ENCODE measurements at regions of chr9 and their contacts with region 1.

Region 1: DNA sequence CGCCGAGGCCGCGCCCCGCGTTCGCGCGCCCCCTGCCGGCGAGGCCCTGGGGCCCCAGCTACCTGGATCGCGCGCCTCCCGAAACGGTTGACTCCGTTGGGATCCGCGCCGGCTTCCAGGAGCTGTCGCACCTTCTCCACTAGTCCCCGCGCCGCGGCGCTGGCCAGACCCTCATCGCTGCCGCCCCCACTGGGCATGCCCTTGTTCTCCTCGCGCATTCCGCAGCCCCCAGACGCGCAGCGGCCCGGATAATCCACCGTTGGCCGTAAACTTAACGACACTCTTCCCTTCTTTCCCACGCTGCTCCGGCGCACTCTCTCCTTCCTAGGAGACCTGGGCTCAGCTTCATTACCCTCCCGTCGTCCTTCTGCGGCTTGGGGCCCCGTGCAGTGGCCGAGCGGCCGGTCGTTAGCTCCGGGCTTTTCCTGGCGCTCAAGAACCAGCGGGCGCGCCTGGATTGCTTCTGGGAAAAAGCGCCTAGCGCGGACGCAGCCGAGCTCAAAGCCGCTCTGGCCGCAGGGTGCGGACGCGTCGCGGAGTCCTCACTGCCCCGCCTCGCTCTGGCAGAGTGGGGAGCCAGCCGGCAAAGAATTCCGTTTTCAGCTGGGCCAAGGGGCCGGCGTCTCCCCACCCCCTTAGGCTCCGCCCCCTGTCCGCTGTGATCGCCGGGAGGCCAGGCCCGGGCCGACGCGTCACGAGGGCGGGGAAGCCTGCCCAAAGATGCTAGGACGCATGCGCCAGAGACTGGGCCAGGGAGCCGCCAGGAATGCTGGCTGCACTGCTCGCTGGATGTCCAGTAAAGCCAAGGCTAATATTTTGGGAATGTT is at the start of gene CDKN2B:
- DNase-seq: peak; percentile 95
- H3K4me3 ChIP-seq: peak within 1 kb of the TSS; percentile 60 to 95 (median 90)
- H3K27ac ChIP-seq: peak within 1 kb of the TSS; percentile 70
- H3K4me1 ChIP-seq: peaks cover 16% of the 10 kb centered on the region
- H3K27me3 ChIP-seq: peaks cover 20 to 36% of the 10 kb centered on the region in 2 experiments
- CTCF ChIP-seq: peak; percentile 89 to 95
- POLR2A ChIP-seq: peak; percentile 95
- total RNA-seq, gene CDKN2B: 2.1 and 2.3 TPM in 2 replicates

Region 2: DNA sequence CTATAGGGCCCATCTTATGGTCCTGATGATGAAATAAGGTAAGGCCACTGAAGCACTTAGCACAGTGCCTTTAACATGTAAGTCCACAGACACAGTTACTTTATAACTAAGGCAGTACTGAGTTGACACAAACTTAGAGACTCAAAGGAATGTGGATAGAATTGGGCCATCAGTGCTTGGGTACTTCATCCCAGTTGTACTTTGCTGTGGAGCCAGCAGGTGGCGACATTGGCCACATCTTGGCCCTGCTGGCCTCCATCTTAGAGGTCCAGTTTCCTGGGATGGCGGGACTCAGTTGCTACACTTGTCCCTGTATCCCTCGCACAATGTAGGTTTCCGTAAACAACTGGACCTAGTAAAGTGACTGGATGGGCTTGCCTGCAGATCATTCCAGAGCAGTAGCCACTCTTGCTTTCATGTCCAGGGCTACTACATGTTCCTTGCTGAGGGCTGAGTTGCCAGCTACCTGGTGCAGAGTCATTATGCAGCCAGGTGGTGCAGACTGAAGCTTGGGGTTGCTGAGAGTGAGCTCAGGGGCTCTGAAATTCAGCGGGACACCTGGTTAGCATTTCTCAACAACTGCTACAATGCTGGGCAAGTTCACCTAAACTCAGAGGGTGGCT is 195.9 kb before region 1 on chr9:
- CTCF ChIA-PET with region 1: interaction called, 139 read pairs
- POLR2A ChIA-PET with region 1: interaction called, 4 read pairs
- dilution Hi-C with region 1: no loop called
- intact Hi-C with region 1: loop called (anchors 1 kb)
- DNase-seq: peak; percentile 81
- H3K4me3 ChIP-seq: no peak overlapping the region
- H3K27ac ChIP-seq: peak overlapping the region; percentile 85
- H3K4me1 ChIP-seq: peaks cover 20% of the 10 kb centered on the region
- H3K27me3 ChIP-seq: no peaks in the 10 kb centered on the region
- CTCF ChIP-seq: peak; percentile 86 to 89
- POLR2A ChIP-seq: no peak

Region 3: GRCh38 chr9:21883642-21884041 is 125.3 kb before region 1 on chr9:
- CTCF ChIA-PET with region 1: no interaction called
- POLR2A ChIA-PET with region 1: no interaction called
- dilution Hi-C with region 1: no loop called
- intact Hi-C with region 1: no loop called
- DNase-seq: no peak
- H3K4me3 ChIP-seq: no peak overlapping the region
- H3K27ac ChIP-seq: no peak overlapping the region
- H3K4me1 ChIP-seq: no peaks in the 10 kb centered on the region
- H3K27me3 ChIP-seq: no peaks in the 10 kb centered on the region
- CTCF ChIP-seq: no peak
- POLR2A ChIP-seq: no peak

Region 4: GRCh38 chr9:21974548-21975409 is 34.2 kb before region 1 on chr9:
- CTCF ChIA-PET with region 1: interaction called, 47 read pairs
- POLR2A ChIA-PET with region 1: interaction called, 4 read pairs
- dilution Hi-C with region 1: no loop called
- intact Hi-C with region 1: loop called (anchors 2 kb)
- DNase-seq: peak; percentile 51
- H3K4me3 ChIP-seq: peak overlapping the region; percentile 31 to 51 (median 35)
- H3K27ac ChIP-seq: no peak overlapping the region
- H3K4me1 ChIP-seq: peaks cover 19% of the 10 kb centered on the region
- H3K27me3 ChIP-seq: peaks cover 77 to 99% of the 10 kb centered on the region in 2 experiments
- CTCF ChIP-seq: no peak
- POLR2A ChIP-seq: no peak

Region 5: GRCh38 chr9:22030101-22030598 is 21.2 kb after region 1 on chr9:
- CTCF ChIA-PET with region 1: interaction called, 17 read pairs
- POLR2A ChIA-PET with region 1: interaction called, 3 read pairs
- dilution Hi-C with region 1: no loop called
- intact Hi-C with region 1: no loop called
- DNase-seq: peak; percentile 83
- H3K4me3 ChIP-seq: no peak overlapping the region
- H3K27ac ChIP-seq: peak overlapping the region; percentile 44
- H3K4me1 ChIP-seq: peaks cover 12% of the 10 kb centered on the region
- H3K27me3 ChIP-seq: no peaks in the 10 kb centered on the region
- CTCF ChIP-seq: no peak
- POLR2A ChIP-seq: no peak

Region 6: GRCh38 chr9:22119537-22120158 is 110.7 kb after region 1 on chr9:
- CTCF ChIA-PET with region 1: interaction called, 138 read pairs
- POLR2A ChIA-PET with region 1: interaction called, 7 read pairs
- dilution Hi-C with region 1: no loop called
- intact Hi-C with region 1: loop called (anchors 1 kb)
- DNase-seq: peak; percentile 53
- H3K4me3 ChIP-seq: no peak overlapping the region
- H3K27ac ChIP-seq: no peak overlapping the region
- H3K4me1 ChIP-seq: peaks cover 26% of the 10 kb centered on the region
- H3K27me3 ChIP-seq: no peaks in the 10 kb centered on the region
- CTCF ChIP-seq: peak; percentile 35 to 53
- POLR2A ChIP-seq: no peak

Region 7: GRCh38 chr9:22244141-22245011 is 235.4 kb after region 1 on chr9:
- CTCF ChIA-PET with region 1: interaction called, 61 read pairs
- POLR2A ChIA-PET with region 1: interaction called, 3 read pairs
- dilution Hi-C with region 1: no loop called
- intact Hi-C with region 1: loop called (anchors 1 kb)
- DNase-seq: peak; percentile 47
- H3K4me3 ChIP-seq: no peak overlapping the region
- H3K27ac ChIP-seq: no peak overlapping the region
- H3K4me1 ChIP-seq: peaks cover 6% of the 10 kb centered on the region
- H3K27me3 ChIP-seq: peaks cover 4 to 7% of the 10 kb centered on the region in 2 experiments
- CTCF ChIP-seq: peak; percentile 28 to 58
- POLR2A ChIP-seq: no peak

Region 8: DNA sequence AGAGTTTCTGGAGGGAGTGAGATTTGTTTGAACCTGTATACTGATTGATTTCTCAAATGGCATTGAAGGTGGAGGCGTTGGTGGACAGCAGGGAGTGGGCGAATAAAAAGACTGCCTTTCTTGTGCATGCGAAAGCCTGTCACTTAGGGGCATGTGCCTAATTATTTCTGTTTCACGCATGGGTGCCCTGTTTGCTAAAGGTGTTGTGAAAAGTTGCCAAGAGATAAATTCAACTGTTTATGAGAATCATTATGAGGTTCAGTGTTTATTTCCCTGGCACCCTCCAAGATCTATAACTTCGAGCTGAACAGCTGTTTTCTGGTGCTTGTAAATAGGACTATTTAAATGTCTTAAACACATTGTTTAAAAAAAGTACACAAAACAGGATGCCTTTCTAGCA is 370.3 kb after region 1 on chr9:
- CTCF ChIA-PET with region 1: no interaction called
- POLR2A ChIA-PET with region 1: no interaction called
- dilution Hi-C with region 1: no loop called
- intact Hi-C with region 1: no loop called
- DNase-seq: no peak
- H3K4me3 ChIP-seq: no peak overlapping the region
- H3K27ac ChIP-seq: no peak overlapping the region
- H3K4me1 ChIP-seq: no peaks in the 10 kb centered on the region
- H3K27me3 ChIP-seq: peaks cover 1 to 6% of the 10 kb centered on the region in 2 experiments
- CTCF ChIP-seq: no peak
- POLR2A ChIP-seq: no peak

Region 9: DNA sequence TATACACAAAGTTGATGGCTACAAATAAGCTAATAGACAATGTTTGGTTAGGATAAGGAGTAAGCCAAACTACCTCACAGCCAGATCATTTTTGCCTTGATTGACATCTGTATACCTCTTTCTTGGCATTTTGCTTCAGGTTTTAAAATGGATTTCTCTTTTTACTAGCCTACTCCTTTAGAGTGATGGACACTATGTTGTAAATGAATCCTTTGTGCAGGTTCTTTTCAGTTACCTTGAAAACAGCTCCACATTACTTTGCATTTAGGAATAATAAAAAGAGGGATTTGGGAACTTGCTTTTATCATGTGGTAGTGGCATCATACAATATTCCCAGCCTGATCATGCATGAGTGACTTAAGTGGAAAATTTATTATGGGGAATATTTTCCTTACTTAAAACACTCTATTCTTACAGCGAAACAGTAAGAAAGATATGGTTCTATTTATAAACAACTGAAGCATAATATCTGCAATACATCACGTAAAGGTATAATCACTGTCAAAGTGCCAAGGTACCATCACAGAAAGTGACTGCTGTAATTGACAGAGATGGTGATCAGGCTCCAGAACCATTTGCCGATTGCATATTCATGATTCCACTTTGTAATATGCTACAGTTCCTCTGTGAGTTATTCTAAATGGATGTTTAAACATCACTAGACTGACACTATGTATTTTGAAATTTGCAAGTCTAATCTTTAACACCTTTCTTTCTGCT is 764.7 kb after region 1 on chr9:
- CTCF ChIA-PET with region 1: no interaction called
- POLR2A ChIA-PET with region 1: no interaction called
- dilution Hi-C with region 1: no loop called
- intact Hi-C with region 1: no loop called
- DNase-seq: no peak
- H3K4me3 ChIP-seq: no peak overlapping the region
- H3K27ac ChIP-seq: no peak overlapping the region
- H3K4me1 ChIP-seq: no peaks in the 10 kb centered on the region
- H3K27me3 ChIP-seq: no peaks in the 10 kb centered on the region
- CTCF ChIP-seq: no peak
- POLR2A ChIP-seq: no peak